CD4-positive, alpha-beta T cell (primary cell): ENCODE measurements at regions of chr15 and their contacts with region 1.

Region 1: DNA sequence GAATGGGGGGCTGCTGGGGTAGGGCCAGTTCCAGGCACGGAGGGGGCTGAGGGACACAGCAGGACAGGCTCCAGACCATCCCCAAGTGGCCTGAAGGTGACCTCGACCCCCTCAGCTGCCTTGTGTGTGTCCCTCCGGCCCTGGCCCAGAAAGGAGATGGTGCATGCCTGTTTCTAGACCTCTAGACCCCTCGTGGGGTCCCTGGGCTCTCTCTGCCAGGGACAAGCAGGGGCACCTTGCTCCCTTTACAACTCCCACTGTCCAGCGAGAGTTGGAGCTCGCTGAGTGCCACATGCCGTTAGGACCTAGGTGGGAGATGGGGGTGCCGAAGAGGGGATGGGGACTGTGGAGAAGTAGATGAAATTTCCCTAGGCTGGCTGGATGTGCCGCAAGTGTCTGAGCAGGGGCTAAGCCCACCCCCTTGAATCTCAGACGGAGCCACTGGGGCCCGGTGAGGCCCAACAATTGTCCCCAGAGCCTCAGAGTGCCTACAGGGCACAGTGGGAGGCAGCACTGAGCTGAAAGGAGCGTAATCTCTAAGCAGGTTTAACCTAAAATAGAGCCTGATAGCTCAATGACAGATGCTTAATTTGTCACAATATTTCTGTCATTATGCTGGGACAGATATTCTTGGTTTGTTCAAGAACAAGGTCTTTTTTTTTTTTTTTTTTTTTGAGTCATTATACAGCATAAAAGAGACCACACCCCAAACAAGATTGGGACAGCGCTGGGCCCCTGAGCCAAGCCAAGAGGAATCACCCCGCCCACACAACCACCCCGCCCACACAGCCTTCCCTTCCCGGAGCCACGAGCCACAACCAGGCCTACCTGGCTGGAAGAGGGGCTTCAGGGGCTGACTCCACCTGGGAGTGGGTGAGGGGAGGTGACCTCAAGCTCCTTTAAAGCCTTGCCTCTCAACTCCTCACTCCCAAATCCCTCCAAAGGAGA is 23.6 kb upstream of the KLF13 start:
- DNase-seq: peak in 4 of 14 experiments; percentile 16 to 54 (median 39)
- ATAC-seq: peak; percentile 49
- H3K4me3 ChIP-seq: no peak overlapping the region
- H3K4me3 Mint-ChIP-seq: no peak overlapping the region
- H3K27ac ChIP-seq: no peak overlapping the region
- H3K27ac Mint-ChIP-seq: peak overlapping the region; percentile 58
- H3K4me1 ChIP-seq: peaks cover 43% of the 10 kb centered on the region
- H3K4me1 Mint-ChIP-seq: peaks cover 46% of the 10 kb centered on the region
- H3K27me3 ChIP-seq: no peaks in the 10 kb centered on the region
- H3K27me3 Mint-ChIP-seq: peaks cover 5% of the 10 kb centered on the region
- CTCF ChIP-seq: no peak

Region 2: GRCh38 chr15:31352911-31353811 is 50.1 kb after region 1 on chr15:
- CTCF ChIA-PET with region 1: no interaction called
- POLR2A ChIA-PET with region 1: no interaction called
- intact Hi-C with region 1: loop called in 1 of 2 experiments (anchors 5 kb)
- DNase-seq: peak in 6 of 14 experiments; percentile 48 to 77 (median 64)
- ATAC-seq: peak; percentile 57
- H3K4me3 ChIP-seq: peak overlapping the region; percentile 21
- H3K4me3 Mint-ChIP-seq: peak overlapping the region; percentile 85
- H3K27ac ChIP-seq: peak overlapping the region; percentile 78 to 93
- H3K27ac Mint-ChIP-seq: peak overlapping the region; percentile 90
- H3K4me1 ChIP-seq: peaks cover 100% of the 10 kb centered on the region
- H3K4me1 Mint-ChIP-seq: peaks cover 97% of the 10 kb centered on the region
- H3K27me3 ChIP-seq: no peaks in the 10 kb centered on the region
- H3K27me3 Mint-ChIP-seq: no peaks in the 10 kb centered on the region
- CTCF ChIP-seq: no peak